ENCODE measurements at regions of chr16 and their contacts with region 1.

Region 1: DNA sequence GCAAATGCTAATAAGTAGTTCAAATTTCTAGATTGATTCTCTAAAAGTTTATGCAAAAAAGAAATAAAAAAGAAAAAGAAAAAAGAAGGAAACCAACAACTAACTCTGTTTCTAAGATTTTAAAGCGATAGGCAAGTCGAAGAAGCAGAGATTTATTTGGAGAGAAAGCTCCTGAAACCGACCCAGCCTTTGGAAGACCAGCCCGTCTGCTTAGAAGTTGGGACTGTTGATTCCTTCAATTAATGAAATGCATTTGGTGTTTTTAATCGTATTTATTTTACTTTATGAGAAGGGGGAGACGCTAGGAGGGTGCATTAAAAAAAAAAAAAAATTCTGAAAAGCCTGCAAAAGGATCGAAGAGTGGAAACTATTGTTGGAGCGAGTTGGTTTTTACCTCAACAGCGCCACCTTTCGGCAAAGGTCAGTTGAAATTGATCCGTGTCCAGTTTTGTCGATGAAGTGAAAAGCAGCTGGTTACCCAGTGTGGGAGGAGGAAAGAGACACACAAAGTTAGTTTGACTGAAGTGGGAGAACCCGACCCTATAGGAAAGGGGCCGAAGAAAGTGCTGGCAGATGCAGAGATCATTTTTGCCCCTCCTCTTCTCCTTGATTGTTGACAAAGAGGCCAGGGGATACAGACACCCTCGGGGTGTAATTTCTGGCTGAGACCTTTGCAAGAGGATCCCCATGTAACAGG is 1.5 kb upstream of the MAF start:
- DNase-seq: peak; percentile 95
- H3K4me3 Mint-ChIP-seq: peak overlapping the region; percentile 99
- H3K27ac Mint-ChIP-seq: peak overlapping the region; percentile 99
- H3K4me1 Mint-ChIP-seq: peaks cover 47% of the 10 kb centered on the region
- H3K27me3 Mint-ChIP-seq: peaks cover 8% of the 10 kb centered on the region

Region 2: GRCh38 chr16:78778101-78779004 is 823.7 kb before region 1 on chr16:
- intact Hi-C with region 1: loop called (anchors 1 kb)
- DNase-seq: peak; percentile 87
- H3K4me3 Mint-ChIP-seq: peak overlapping the region; percentile 63
- H3K27ac Mint-ChIP-seq: peak overlapping the region; percentile 94
- H3K4me1 Mint-ChIP-seq: peaks cover 53% of the 10 kb centered on the region
- H3K27me3 Mint-ChIP-seq: no peaks in the 10 kb centered on the region

Region 3: GRCh38 chr16:79089735-79090284 is 512.3 kb before region 1 on chr16:
- intact Hi-C with region 1: loop called (anchors 5 kb)
- DNase-seq: peak; percentile 91
- H3K4me3 Mint-ChIP-seq: peak overlapping the region; percentile 75
- H3K27ac Mint-ChIP-seq: peak overlapping the region; percentile 94
- H3K4me1 Mint-ChIP-seq: peaks cover 49% of the 10 kb centered on the region
- H3K27me3 Mint-ChIP-seq: peaks cover 5% of the 10 kb centered on the region

Region 4: DNA sequence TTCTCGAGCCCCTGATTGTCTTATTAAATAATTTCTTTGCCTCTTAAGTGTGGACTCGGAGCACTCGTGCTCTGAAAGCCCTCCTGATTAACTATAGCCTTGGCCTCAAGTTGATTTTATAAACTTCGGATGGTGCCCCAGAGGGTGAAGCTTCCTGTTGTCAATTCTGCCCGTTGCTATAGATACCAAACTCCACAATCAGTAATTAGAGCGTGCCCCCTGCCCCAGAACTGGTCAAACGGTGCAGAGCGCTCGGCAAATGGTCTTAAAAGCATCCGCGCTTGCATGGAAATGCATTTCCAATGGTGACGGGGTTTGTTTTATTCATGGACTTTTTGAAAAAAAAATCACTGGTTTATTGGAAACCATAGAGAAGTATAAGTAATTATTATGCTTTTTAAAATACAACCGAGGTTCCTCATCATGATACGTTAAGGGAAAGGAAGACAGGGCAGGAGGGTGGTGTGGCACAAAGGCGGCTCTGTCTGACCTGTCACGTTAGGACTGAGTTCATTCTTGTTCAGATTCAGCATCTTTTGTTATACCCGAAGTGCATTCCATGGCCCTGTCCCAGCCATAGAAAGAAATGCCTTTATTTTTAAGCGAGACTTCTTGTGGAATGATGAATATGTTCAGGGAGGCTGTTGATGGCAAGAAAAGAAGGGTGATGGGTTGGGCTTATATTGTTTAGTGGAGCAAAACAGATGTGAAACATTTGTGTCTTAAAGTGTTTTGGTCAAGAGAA is 477.9 kb before region 1 on chr16:
- intact Hi-C with region 1: no loop called
- DNase-seq: no peak
- H3K4me3 Mint-ChIP-seq: no peak overlapping the region
- H3K27ac Mint-ChIP-seq: no peak overlapping the region
- H3K4me1 Mint-ChIP-seq: no peaks in the 10 kb centered on the region
- H3K27me3 Mint-ChIP-seq: peaks cover 2% of the 10 kb centered on the region

Region 5: GRCh38 chr16:79415983-79416640 is 186.0 kb before region 1 on chr16:
- intact Hi-C with region 1: no loop called
- DNase-seq: peak; percentile 65
- H3K4me3 Mint-ChIP-seq: peak overlapping the region; percentile 68
- H3K27ac Mint-ChIP-seq: peak overlapping the region; percentile 49
- H3K4me1 Mint-ChIP-seq: peaks cover 27% of the 10 kb centered on the region
- H3K27me3 Mint-ChIP-seq: peaks cover 2% of the 10 kb centered on the region

Region 6: DNA sequence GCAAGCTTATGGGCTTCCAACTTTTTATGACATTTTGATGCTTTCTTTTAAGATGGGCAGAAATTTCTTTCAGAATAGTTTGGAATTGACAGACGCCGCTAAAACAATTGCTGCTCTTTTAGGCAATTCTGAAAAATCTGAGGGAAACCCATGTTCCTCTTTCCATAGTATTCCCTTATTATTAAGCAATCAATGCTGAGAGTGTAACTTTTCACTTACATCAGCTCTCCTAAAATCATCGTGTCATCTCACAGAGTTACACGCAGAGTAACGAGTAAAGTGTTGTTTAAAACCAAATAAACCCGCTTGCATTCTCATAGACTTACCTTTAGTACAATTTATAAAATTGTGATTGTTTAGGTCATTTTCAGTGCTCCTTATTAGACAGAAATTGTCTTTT is 152.2 kb before region 1 on chr16:
- intact Hi-C with region 1: no loop called
- DNase-seq: no peak
- H3K4me3 Mint-ChIP-seq: no peak overlapping the region
- H3K27ac Mint-ChIP-seq: no peak overlapping the region
- H3K4me1 Mint-ChIP-seq: peaks cover 14% of the 10 kb centered on the region
- H3K27me3 Mint-ChIP-seq: peaks cover 20% of the 10 kb centered on the region

Region 7: GRCh38 chr16:79628501-79628975 is 26.5 kb after region 1 on chr16:
- intact Hi-C with region 1: loop called (anchors 1 kb)
- DNase-seq: peak; percentile 91
- H3K4me3 Mint-ChIP-seq: peak overlapping the region; percentile 70
- H3K27ac Mint-ChIP-seq: peak overlapping the region; percentile 88
- H3K4me1 Mint-ChIP-seq: peaks cover 57% of the 10 kb centered on the region
- H3K27me3 Mint-ChIP-seq: peaks cover 15% of the 10 kb centered on the region

Region 8: GRCh38 chr16:79845033-79845733 is 243.1 kb after region 1 on chr16:
- intact Hi-C with region 1: loop called (anchors 5 kb)
- DNase-seq: peak; percentile 61
- H3K4me3 Mint-ChIP-seq: peak overlapping the region; percentile 42
- H3K27ac Mint-ChIP-seq: peak overlapping the region; percentile 64
- H3K4me1 Mint-ChIP-seq: peaks cover 37% of the 10 kb centered on the region
- H3K27me3 Mint-ChIP-seq: no peaks in the 10 kb centered on the region

Measured in activated CD4-positive, alpha-beta T cell treated with anti-CD3 and anti-CD28 coated beads, Interleukin-2, amount 10 ng/mL, durations not matched to agents 24 days and 14 days (primary cell).